Caco-2 (cell line): ENCODE measurements at regions of chr1 and their contacts with region 1.

Region 1: GRCh38 chr1:246699095-246699735 is 25.0 kb upstream of the SCCPDH start:
- DNase-seq: peak; percentile 83 to 86
- H3K4me3 ChIP-seq: peak overlapping the region; percentile 19
- H3K4me3 Mint-ChIP-seq: peak overlapping the region; percentile 58
- H3K27ac Mint-ChIP-seq: no peak overlapping the region
- H3K4me1 ChIP-seq: no peaks in the 10 kb centered on the region
- H3K4me1 Mint-ChIP-seq: peaks cover 7% of the 10 kb centered on the region
- H3K27me3 ChIP-seq: no peaks in the 10 kb centered on the region
- H3K27me3 Mint-ChIP-seq: no peaks in the 10 kb centered on the region
- CTCF ChIP-seq: peak; percentile 84 to 85

Region 2: GRCh38 chr1:246647113-246647512 is 52.1 kb before region 1 on chr1:
- CTCF ChIA-PET with region 1: interaction called, 7 read pairs
- POLR2A ChIA-PET with region 1: no interaction called
- intact Hi-C with region 1: loop called (anchors 2 kb)
- DNase-seq: peak; percentile 41 to 46
- H3K4me3 ChIP-seq: no peak overlapping the region
- H3K4me3 Mint-ChIP-seq: no peak overlapping the region
- H3K27ac Mint-ChIP-seq: no peak overlapping the region
- H3K4me1 ChIP-seq: no peaks in the 10 kb centered on the region
- H3K4me1 Mint-ChIP-seq: no peaks in the 10 kb centered on the region
- H3K27me3 ChIP-seq: no peaks in the 10 kb centered on the region
- H3K27me3 Mint-ChIP-seq: no peaks in the 10 kb centered on the region
- CTCF ChIP-seq: peak; percentile 29 to 52

Region 3: DNA sequence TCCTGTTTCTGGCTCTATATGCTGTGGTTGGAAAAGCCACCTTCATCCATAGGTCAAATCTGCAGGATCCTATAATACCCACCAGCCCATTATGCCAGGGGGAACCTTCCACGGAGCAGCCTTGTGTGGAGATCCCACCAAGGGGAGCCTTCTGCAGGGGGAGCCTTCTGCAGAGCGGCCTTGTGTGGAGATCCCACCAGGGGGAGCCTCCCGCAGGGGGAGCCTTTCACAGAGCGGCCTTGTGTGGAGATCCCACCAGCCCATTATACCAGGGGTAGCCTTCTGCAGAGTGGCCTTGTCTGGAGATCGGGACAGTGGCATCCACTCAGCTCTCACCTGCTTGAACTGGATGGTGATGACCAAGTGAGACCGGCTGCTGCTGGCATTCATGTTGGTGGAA is 110.3 kb after region 1 on chr1:
- CTCF ChIA-PET with region 1: no interaction called
- POLR2A ChIA-PET with region 1: no interaction called
- intact Hi-C with region 1: no loop called
- DNase-seq: no peak
- H3K4me3 ChIP-seq: no peak overlapping the region
- H3K4me3 Mint-ChIP-seq: no peak overlapping the region
- H3K27ac Mint-ChIP-seq: no peak overlapping the region
- H3K4me1 ChIP-seq: peaks cover 3% of the 10 kb centered on the region; the same call in 1 of the 2 replicates
- H3K4me1 Mint-ChIP-seq: peaks cover 9% of the 10 kb centered on the region
- H3K27me3 ChIP-seq: no peaks in the 10 kb centered on the region
- H3K27me3 Mint-ChIP-seq: no peaks in the 10 kb centered on the region
- CTCF ChIP-seq: no peak